Activated CD8-positive, alpha-beta T cell treated with anti-CD3 and anti-CD28 coated beads, Interleukin-2, amount 10 ng/mL, durations not matched to agents 7 days and 5 days (primary cell): ENCODE measurements at regions of chr19 and their contacts with region 1.

Region 1: DNA sequence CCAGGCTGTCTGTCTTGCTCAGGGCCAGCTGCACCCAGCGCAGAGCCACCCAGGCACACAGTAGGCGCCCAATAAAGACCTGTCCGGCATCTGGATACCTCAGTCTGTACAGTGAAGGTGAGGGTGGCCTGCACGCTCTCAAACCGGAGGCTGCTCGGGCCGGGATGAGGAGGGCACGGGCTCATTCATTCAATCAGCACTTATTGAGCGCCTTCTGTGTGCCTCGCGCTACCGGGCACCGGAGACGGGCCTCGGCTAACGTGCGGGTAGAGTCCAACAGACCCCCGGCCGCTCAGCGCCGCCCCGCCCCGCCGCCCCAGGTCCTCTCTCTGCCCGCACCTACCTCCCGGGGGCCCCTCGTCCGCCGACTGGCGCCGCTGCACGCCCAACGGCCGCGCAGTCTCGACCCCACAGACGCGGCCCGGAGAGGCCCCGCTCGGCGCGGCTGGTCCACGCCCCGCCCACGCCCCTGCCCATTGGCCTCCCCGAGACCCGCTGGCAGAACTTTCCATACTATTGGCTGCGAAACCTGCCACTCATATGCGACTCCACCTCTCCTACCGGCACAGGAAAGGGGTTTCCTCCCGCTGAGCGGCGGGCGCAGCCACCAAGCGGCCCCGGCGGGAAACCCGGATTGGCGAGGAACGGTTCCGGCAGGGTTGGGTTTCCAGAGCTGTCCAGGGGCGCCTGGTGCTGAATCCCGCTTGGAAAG is at the start of gene SLC39A3:
- DNase-seq: peak; percentile 99
- ATAC-seq: peak; percentile 100
- H3K4me3 Mint-ChIP-seq: peak within 1 kb of the TSS; percentile 90
- H3K27ac Mint-ChIP-seq: peak within 1 kb of the TSS; percentile 78
- H3K4me1 Mint-ChIP-seq: peaks cover 17% of the 10 kb centered on the region
- H3K27me3 Mint-ChIP-seq: peaks cover 6% of the 10 kb centered on the region
- total RNA-seq, gene SLC39A3: 28.1 to 38.2 TPM

Region 2: DNA sequence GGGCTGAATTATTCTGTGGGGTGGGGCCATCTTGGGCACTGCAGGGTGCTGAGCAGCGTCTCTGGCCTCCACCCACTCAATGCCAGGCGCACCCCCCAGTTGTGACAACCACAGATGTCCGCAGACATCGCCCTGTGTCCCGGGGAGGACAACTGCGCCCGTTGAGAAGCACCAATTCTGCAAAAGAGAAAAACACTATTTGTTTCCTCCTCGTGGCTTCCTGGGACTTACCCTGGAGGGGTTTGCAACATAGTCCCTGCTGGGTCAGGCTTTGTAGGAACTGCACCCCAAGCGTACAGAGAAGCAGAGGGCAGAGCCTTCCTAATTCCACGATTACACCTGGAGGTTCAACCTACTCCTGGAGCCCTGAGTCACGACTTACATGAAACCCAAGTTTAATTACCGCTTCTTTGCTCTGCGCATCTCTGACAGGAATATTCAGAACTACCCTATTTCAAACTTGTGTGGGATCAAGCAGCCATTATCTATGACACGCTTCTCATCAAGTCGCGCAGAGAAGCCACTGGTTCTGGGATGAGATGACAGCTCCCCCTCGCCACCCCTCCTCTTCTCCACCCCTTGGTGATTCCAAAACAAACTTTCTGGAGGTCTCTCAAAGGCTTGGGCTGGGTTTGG is 11.2 kb after region 1 on chr19:
- CTCF ChIA-PET with region 1: interaction called, 10 read pairs
- POLR2A ChIA-PET with region 1: no interaction called
- DNase-seq: no peak
- ATAC-seq: no peak
- H3K4me3 Mint-ChIP-seq: no peak overlapping the region
- H3K27ac Mint-ChIP-seq: no peak overlapping the region
- H3K4me1 Mint-ChIP-seq: no peaks in the 10 kb centered on the region
- H3K27me3 Mint-ChIP-seq: no peaks in the 10 kb centered on the region